Right cardiac atrium (tissue), 5 donors: ENCODE measurements at regions of chr13 and their contacts with region 1.

Region 1: DNA sequence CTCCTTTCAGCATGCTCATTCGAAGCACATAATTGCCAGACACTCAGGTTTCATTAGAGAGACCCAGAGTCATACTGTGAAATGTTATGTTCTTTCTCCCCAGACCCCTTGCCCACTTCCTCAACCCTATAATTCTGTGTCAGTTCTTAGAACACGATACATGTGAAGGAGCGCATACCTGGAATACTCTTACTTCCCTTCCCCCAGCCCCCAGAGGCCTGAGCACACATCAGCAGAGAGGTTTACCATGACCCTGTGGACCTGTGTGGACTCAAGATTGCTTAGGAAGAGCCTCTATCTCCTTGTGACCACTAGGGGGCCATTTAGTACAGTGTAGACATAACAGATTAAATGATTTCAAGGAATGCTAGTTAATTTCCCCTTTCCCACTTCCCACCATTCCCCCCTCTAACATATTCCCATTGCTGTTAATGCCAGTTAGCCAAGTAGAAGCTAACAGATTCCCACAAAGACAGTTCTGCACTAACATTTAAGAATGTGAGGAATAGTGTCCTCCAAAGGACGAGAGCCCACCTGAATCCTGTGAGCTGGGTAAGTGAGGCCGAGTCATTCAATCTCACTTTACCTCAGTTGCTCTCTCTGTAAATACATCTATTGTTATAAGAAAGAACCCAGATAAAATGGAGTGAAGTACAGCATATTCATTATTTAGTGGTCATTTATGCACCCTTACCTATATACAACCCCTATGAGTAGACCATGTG is 154.2 kb upstream of the MAB21L1 start:
- DNase-seq: peak in 1 of 3 donors; percentile 17
- ATAC-seq: peak; percentile 79 to 83
- H3K4me3 ChIP-seq: no peak overlapping the region
- H3K27ac ChIP-seq: no peak overlapping the region
- H3K4me1 ChIP-seq: no peaks in the 10 kb centered on the region
- H3K27me3 ChIP-seq: no peaks in the 10 kb centered on the region

Region 2: GRCh38 chr13:35789335-35790165 is 158.8 kb after region 1 on chr13:
- intact Hi-C with region 1: loop called in 2 of 4 experiments (anchors 10 kb)
- DNase-seq: no peak
- ATAC-seq: peak; percentile 54 to 60
- H3K4me3 ChIP-seq: no peak overlapping the region
- H3K27ac ChIP-seq: no peak overlapping the region
- H3K4me1 ChIP-seq: no peaks in the 10 kb centered on the region
- H3K27me3 ChIP-seq: no peaks in the 10 kb centered on the region